Activated B cell treated with CpG ODN at 0.5 μM for 24 hours (primary cell): ENCODE measurements at regions of chr5 and their contacts with region 1.

Region 1: GRCh38 chr5:91499943-91500531 is 116.9 kb upstream of the ARRDC3 start:
- DNase-seq: no peak
- ATAC-seq: no peak
- H3K4me3 Mint-ChIP-seq: no peak overlapping the region
- H3K27ac Mint-ChIP-seq: no peak overlapping the region
- H3K4me1 Mint-ChIP-seq: no peaks in the 10 kb centered on the region
- H3K27me3 Mint-ChIP-seq: no peaks in the 10 kb centered on the region
- CTCF ChIP-seq: peak; percentile 46

Region 2: GRCh38 chr5:91641730-91642350 is 141.8 kb after region 1 on chr5:
- CTCF ChIA-PET with region 1: interaction called, 6 read pairs
- POLR2A ChIA-PET with region 1: no interaction called
- intact Hi-C with region 1: loop called (anchors 2 kb)
- DNase-seq: no peak
- ATAC-seq: no peak
- H3K4me3 Mint-ChIP-seq: no peak overlapping the region
- H3K27ac Mint-ChIP-seq: no peak overlapping the region
- H3K4me1 Mint-ChIP-seq: no peaks in the 10 kb centered on the region
- H3K27me3 Mint-ChIP-seq: no peaks in the 10 kb centered on the region
- CTCF ChIP-seq: peak; percentile 46

Region 3: DNA sequence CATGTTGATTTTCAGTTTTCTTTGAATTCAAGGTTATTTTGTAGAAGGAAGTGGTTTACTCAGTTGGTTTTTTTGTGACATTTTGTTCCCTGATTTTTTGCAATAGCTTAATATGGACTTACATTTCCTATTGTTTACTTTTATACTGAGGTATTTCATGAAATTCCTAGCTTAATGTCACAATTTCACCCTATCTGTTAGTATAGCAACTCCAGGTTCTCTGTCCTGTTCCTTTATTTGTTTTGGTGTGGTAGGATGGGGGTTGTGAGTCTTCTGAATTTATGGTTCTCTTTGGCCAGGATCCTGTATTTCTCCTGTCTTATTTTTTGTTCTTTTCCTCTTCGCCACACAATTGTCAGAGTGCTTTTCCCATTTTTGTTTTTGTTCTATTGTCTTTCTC is 406.5 kb after region 1 on chr5:
- CTCF ChIA-PET with region 1: no interaction called
- POLR2A ChIA-PET with region 1: no interaction called
- intact Hi-C with region 1: loop called (anchors 10 kb)
- DNase-seq: no peak
- ATAC-seq: no peak
- H3K4me3 Mint-ChIP-seq: no peak overlapping the region
- H3K27ac Mint-ChIP-seq: no peak overlapping the region
- H3K4me1 Mint-ChIP-seq: no peaks in the 10 kb centered on the region
- H3K27me3 Mint-ChIP-seq: no peaks in the 10 kb centered on the region
- CTCF ChIP-seq: no peak